Posterior vena cava (tissue), 2 donors: ENCODE measurements at regions of chr16 and their contacts with region 1.

Region 1: GRCh38 chr16:19837984-19838707 is 46.5 kb downstream of the GPRC5B start:
- DNase-seq: no peak

Region 2: DNA sequence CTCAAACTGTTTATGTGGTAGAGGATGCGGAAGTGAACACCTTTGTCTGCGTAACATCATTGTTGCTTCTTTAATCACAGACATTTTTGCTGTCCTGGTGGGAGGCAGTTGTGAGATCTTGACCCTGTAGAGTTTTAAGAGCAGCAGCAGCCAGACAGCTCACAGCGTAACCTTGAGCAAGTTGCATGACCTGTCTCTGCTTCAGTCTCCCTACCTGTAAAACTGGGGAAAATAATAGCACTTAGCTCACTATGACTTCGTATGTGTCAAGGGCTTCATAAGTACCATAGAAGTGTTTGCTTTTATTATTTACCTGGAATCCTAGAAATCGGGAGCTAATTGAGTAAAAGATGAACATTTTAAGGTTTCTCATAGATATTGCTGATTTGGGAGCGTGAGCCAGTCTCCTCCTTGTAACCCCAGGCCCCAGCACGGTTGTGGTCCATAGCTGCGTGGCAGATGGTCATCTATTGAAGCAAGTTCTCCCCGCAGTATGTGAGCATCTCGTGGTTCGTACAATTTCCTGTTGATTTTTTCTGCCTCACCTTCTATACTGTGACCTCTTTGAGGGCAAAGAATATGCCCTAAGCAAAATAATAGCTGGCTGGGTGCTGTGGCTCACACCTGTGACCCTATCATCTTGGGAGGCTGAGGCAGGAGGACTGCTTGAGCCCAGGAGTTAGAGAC is 12.1 kb after region 1 on chr16:
- intact Hi-C with region 1: loop called in 1 of 2 experiments (anchors 1 kb)
- DNase-seq: no peak